MCF 10A (cell line): ENCODE measurements at regions of chr20 and their contacts with region 1.

Region 1: GRCh38 chr20:6265204-6265904 is 142.5 kb upstream of the FERMT1 start:
- DNase-seq: peak; percentile 76
- H3K4me3 Mint-ChIP-seq: peak overlapping the region; percentile 30
- H3K27ac Mint-ChIP-seq: peak overlapping the region; percentile 82
- H3K4me1 Mint-ChIP-seq: peaks cover 11% of the 10 kb centered on the region
- H3K27me3 Mint-ChIP-seq: no peaks in the 10 kb centered on the region
- CTCF ChIP-seq: peak; percentile 57

Region 2: DNA sequence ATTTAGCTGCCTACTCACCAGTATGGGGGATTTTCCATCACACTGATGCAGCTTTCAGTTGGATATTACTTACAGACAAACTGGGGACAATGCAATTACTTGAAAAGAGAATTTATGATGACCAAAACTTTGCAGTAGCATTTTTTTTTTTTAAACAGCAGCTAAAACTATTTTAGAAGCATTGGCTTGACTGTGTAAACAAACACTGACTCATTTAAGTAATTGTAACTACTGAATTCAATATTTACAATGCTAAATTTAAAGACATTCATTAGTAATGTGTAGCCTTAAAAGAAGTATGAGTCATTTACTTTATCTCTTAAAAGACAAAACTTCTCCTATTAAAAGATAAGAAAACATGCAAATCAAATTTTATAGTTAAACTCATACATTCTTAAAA is 153.4 kb after region 1 on chr20:
- CTCF ChIA-PET with region 1: no interaction called
- POLR2A ChIA-PET with region 1: no interaction called
- intact Hi-C with region 1: no loop called
- DNase-seq: no peak
- H3K4me3 Mint-ChIP-seq: no peak overlapping the region
- H3K27ac Mint-ChIP-seq: no peak overlapping the region
- H3K4me1 Mint-ChIP-seq: peaks cover 6% of the 10 kb centered on the region
- H3K27me3 Mint-ChIP-seq: no peaks in the 10 kb centered on the region
- CTCF ChIP-seq: no peak

Region 3: GRCh38 chr20:6566821-6567220 is 301.5 kb after region 1 on chr20:
- CTCF ChIA-PET with region 1: interaction called, 7 read pairs
- POLR2A ChIA-PET with region 1: interaction called, 3 read pairs
- intact Hi-C with region 1: loop called (anchors 5 kb)
- DNase-seq: peak; percentile 94
- H3K4me3 Mint-ChIP-seq: no peak overlapping the region
- H3K27ac Mint-ChIP-seq: no peak overlapping the region
- H3K4me1 Mint-ChIP-seq: peaks cover 18% of the 10 kb centered on the region
- H3K27me3 Mint-ChIP-seq: no peaks in the 10 kb centered on the region
- CTCF ChIP-seq: no peak

Region 4: GRCh38 chr20:6636209-6637159 is 371.1 kb after region 1 on chr20:
- CTCF ChIA-PET with region 1: interaction called, 47 read pairs
- POLR2A ChIA-PET with region 1: interaction called, 3 read pairs
- intact Hi-C with region 1: loop called (anchors 1 kb)
- DNase-seq: peak; percentile 80
- H3K4me3 Mint-ChIP-seq: no peak overlapping the region
- H3K27ac Mint-ChIP-seq: no peak overlapping the region
- H3K4me1 Mint-ChIP-seq: peaks cover 17% of the 10 kb centered on the region
- H3K27me3 Mint-ChIP-seq: no peaks in the 10 kb centered on the region
- CTCF ChIP-seq: peak; percentile 55

Region 5: GRCh38 chr20:7375905-7376304 is 1110.6 kb after region 1 on chr20:
- CTCF ChIA-PET with region 1: interaction called, 5 read pairs
- POLR2A ChIA-PET with region 1: no interaction called
- intact Hi-C with region 1: loop called (anchors 5 kb)
- DNase-seq: peak; percentile 53
- H3K4me3 Mint-ChIP-seq: no peak overlapping the region
- H3K27ac Mint-ChIP-seq: no peak overlapping the region
- H3K4me1 Mint-ChIP-seq: no peaks in the 10 kb centered on the region
- H3K27me3 Mint-ChIP-seq: no peaks in the 10 kb centered on the region
- CTCF ChIP-seq: peak; percentile 35